H1 (cell line): ENCODE measurements at regions of chr5 and their contacts with region 1.

Region 1: DNA sequence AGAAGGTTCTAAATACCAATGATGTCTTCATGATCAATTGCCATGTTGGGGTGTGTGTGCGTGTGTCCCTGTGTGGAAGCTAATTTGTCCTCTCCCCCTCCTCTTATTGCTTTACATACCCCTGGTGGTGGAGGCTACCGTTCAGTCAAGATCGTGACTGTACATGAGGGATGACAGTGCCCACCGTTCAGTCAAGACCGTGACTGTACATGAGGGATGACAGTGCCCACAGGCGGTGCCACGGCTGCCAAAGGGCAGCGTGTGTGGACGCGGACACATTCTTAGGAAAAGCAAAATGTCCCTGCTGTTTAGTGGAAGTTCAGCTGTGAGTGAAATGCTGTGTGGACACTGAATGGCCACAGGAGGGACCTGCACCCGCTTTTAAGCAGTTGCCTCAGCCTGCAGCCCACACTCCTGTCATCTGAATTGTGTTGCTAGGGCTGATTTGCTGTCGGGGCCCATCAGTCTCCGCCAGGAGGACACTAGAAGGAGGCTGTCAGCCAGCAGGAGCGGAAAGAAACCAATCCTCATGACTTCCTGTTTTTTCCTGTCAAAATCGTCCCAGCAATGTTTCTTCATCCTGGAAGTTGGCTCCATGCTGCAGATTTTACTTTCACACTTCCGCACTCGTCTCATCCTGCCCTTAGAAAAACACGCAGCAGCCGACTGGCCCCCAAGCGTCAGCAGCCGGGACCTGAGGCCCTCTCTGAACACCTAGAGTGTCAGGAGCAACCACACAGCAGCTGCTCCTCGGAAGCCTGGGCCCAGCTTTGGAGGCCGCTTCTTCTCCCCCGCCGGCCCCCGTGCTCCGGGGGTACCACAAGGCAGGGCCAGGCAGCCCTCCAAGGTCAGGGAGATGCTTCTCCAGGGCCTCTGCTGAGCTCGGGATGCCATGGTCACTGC is 9.1 kb downstream of the OR2V1 start:
- DNase-seq: no peak
- H3K4me3 ChIP-seq: no peak overlapping the region
- H3K27ac ChIP-seq: no peak overlapping the region
- H3K4me1 ChIP-seq: no peaks in the 10 kb centered on the region; a peak in 1 of 7 replicates
- H3K27me3 ChIP-seq: peaks cover 0 to 5% (median 1%) of the 10 kb centered on the region in 4 experiments; a peak in 2 of 7 replicates
- CTCF ChIP-seq: peak; percentile 2 to 27 (median 19); a peak in 3 of 4 replicates
- EP300 ChIP-seq: no peak
- POLR2A ChIP-seq: no peak
- RAD21 ChIP-seq: peak in 1 of 2 experiments; percentile 20; a peak in 2 of 4 replicates

Region 2: DNA sequence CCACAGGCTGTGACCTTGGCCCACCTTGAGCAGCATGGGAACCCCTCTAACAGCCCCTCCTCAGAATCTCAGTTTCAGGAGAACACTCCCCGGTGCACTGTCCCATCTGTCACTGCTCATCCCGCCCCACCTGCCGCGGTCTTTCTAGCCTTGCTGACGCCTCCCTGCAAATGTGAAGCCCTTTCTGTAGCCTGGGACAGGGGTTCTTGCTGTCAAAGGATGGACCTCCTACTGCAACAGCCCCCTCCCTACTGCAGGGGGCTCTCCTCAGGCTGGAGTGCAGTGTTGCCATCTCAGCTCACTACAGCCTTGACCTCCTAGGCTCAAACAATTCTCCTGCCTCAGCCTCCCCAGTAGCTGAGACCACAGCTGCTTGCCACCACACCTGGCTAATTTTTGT is 10.9 kb before region 1 on chr5:
- CTCF ChIA-PET with region 1: interaction called, 10 read pairs
- POLR2A ChIA-PET with region 1: interaction called, 3 read pairs
- DNase-seq: no peak
- H3K4me3 ChIP-seq: no peak overlapping the region
- H3K27ac ChIP-seq: no peak overlapping the region
- H3K4me1 ChIP-seq: peaks cover 2 to 19% (median 6%) of the 10 kb centered on the region in 4 experiments; a peak in 6 of 7 replicates
- H3K27me3 ChIP-seq: peaks cover 12 to 28% (median 24%) of the 10 kb centered on the region in 4 experiments
- CTCF ChIP-seq: peak; percentile 11 to 41 (median 35); a peak in 3 of 4 replicates
- EP300 ChIP-seq: no peak
- POLR2A ChIP-seq: no peak
- RAD21 ChIP-seq: peak in 1 of 2 experiments; percentile 9; a peak in 1 of 4 replicates